HEK293 (cell line): ENCODE measurements at regions of chr15 and their contacts with region 1.

Region 1: GRCh38 chr15:40092256-40092978 is 16.3 kb downstream of the BMF start:
- H3K4me3 ChIP-seq: no peak overlapping the region
- H3K27ac ChIP-seq: peak overlapping the region; percentile 98
- H3K4me1 ChIP-seq: peaks cover 53% of the 10 kb centered on the region
- CTCF ChIP-seq: peak; percentile 13; the same call in 1 of the 2 replicates

Region 2: GRCh38 chr15:39987821-39988220 is 104.6 kb before region 1 on chr15:
- CTCF ChIA-PET with region 1: no interaction called
- POLR2A ChIA-PET with region 1: no interaction called
- H3K4me3 ChIP-seq: no peak overlapping the region
- H3K27ac ChIP-seq: no peak overlapping the region
- H3K4me1 ChIP-seq: no peaks in the 10 kb centered on the region
- CTCF ChIP-seq: no peak

Region 3: DNA sequence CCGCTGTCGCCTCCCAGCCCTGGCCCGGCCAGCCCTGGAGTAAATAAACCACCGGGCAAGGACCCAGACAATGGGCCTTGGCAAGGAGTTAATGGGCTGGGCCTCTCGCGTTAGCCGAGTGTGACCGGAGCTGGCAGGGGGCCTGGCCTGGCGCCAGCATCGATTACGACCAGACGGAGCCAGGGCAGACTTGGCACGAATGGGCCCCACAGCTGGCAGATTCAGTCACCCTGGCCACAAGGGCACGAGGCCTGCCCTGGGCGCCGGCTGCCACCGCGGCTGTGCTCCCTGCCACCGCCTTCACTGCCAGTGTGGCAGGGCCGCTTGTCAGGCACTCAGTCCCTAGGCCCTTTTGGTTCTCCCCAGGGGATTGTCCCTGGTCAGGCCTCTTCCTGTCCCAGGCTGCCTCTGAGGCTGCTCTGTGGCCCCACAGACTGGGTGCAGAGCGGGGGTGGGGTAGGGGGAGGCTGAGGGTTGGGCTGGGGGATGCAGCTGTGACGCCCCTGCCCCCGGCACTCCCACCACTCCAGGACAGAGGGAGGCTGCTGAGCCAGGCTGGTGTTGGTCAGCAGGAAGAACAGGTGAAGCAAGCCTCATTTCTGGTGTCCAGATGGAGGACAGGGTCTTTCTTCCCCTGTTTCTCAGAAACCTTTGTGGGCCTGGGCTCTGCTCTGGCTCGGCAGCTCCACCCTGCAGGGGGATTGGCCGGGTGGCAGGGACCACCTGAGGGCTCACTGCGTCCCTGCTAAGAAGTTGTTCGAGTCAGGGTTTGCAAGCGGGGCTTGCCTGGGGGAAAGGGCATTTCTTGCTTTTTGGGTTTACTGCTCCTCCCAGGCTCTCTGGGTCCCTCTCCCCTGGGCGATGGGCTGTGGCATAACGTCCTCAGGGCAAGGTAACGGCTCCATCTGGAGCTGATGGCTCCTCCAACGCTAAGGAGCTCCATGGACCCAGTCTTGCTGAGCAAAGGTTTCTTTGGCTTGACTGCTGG is 22.9 kb before region 1 on chr15:
- CTCF ChIA-PET with region 1: interaction called, 4 read pairs
- POLR2A ChIA-PET with region 1: interaction called, 11 read pairs
- H3K4me3 ChIP-seq: no peak overlapping the region
- H3K27ac ChIP-seq: peak overlapping the region; percentile 93
- H3K4me1 ChIP-seq: peaks cover 24% of the 10 kb centered on the region
- CTCF ChIP-seq: no peak

Region 4: GRCh38 chr15:40081691-40082194 is 10.7 kb before region 1 on chr15:
- CTCF ChIA-PET with region 1: interaction called, 4 read pairs
- POLR2A ChIA-PET with region 1: interaction called, 10 read pairs
- H3K4me3 ChIP-seq: no peak overlapping the region
- H3K27ac ChIP-seq: peak overlapping the region; percentile 67
- H3K4me1 ChIP-seq: peaks cover 5% of the 10 kb centered on the region
- CTCF ChIP-seq: peak; percentile 28; the same call in 1 of the 2 replicates